Uterus (tissue), 4 donors: ENCODE measurements at regions of chr10 and their contacts with region 1.

Region 1: DNA sequence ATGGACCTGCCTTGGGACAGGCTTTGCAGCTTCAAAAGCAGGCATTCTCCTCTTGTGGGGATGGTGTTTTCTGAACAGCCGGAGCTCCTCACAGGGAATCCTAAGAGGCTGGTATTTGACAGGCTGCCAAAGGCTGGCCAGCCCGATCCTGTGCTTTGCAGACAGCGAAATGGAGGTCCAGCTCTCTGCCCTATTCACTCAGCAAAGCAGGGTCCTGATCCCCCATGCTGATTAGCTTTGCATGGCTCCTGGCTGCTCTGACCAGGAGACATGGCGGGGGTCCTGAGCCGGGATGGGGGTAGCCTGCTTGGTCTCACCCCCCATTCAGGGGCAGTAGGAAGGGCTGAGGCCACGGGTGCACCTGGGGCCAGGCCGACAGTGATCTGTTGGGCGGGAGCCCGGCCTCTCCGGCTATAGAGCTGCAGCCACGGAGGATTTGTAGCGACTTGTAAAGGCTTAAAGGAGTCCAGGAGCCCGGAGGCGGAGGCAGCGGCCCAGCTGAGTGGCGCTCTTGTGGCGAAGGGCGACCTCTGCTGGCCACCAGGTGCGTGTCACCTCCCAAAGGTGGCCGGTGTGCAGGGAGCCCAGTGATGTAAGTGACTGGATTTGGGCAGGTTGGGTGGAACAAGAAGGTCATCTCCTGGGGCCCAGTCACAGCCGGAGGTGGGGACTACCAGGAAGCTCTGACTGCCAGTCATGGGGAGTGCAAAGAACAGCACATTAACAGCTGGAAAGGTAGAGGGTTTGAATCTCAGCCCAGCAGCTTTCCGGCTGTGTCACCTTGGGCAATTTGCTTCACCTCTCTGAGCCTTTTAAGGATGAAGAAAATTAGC is 126.5 kb downstream of the ZMIZ1 start:
- DNase-seq: peak; percentile 88 to 89
- H3K4me3 ChIP-seq: no peak overlapping the region
- H3K27ac ChIP-seq: peak overlapping the region; percentile 70 to 71
- H3K4me1 ChIP-seq: peaks cover 0 to 6% of the 10 kb centered on the region in 2 donors
- H3K27me3 ChIP-seq: no peaks in the 10 kb centered on the region
- CTCF ChIP-seq: peak; percentile 87 to 99 (median 96)
- POLR2A ChIP-seq: peak in 1 of 2 donors; percentile 11

Region 2: DNA sequence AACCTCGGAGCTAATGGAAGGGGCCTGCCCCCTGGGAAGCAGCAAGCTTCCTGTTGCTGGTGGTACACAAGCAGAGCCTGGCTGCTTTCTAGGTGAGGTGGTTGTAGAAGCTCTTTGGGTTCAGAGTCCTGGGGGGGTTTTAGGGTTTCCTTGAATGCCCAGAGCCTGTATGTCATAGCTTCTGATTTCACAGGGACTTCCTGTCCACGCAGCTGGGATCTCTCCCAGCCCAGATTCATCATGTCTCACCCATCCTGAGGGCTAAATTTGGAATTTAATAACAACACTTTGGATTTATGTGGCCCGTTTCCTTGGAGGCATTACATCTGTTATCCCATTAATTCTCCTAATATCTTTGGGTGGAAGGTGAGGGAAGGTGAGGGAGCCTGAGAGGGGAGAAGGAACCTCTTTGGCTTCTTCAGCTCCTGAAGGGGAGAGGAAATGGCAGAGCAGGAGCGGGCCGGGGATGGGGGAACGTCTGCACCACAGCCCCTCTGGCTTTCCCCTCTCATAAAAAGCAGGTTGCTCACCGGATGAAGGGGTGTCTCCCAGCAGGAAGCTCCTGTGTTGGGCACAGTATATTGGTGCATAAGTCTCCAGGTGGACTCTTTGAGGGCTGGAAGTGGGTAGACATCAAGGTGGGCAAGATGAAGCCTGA is 1142.0 kb before region 1 on chr10:
- intact Hi-C with region 1: loop called (anchors 5 kb)
- DNase-seq: no peak
- H3K4me3 ChIP-seq: no peak overlapping the region
- H3K27ac ChIP-seq: no peak overlapping the region
- H3K4me1 ChIP-seq: no peaks in the 10 kb centered on the region
- H3K27me3 ChIP-seq: no peaks in the 10 kb centered on the region
- CTCF ChIP-seq: no peak
- POLR2A ChIP-seq: no peak

Region 3: GRCh38 chr10:78302989-78303854 is 892.1 kb before region 1 on chr10:
- intact Hi-C with region 1: loop called (anchors 10 kb)
- DNase-seq: peak; percentile 86 to 96
- H3K4me3 ChIP-seq: peak overlapping the region; percentile 17 to 53
- H3K27ac ChIP-seq: peak overlapping the region; percentile 69 to 87
- H3K4me1 ChIP-seq: no peaks in the 10 kb centered on the region
- H3K27me3 ChIP-seq: no peaks in the 10 kb centered on the region
- CTCF ChIP-seq: peak; percentile 26 to 93 (median 69)
- POLR2A ChIP-seq: peak; percentile 32 to 81